Right ventricle myocardium superior (tissue), 1 donor: ENCODE measurements at regions of chr7 and their contacts with region 1.

Region 1: DNA sequence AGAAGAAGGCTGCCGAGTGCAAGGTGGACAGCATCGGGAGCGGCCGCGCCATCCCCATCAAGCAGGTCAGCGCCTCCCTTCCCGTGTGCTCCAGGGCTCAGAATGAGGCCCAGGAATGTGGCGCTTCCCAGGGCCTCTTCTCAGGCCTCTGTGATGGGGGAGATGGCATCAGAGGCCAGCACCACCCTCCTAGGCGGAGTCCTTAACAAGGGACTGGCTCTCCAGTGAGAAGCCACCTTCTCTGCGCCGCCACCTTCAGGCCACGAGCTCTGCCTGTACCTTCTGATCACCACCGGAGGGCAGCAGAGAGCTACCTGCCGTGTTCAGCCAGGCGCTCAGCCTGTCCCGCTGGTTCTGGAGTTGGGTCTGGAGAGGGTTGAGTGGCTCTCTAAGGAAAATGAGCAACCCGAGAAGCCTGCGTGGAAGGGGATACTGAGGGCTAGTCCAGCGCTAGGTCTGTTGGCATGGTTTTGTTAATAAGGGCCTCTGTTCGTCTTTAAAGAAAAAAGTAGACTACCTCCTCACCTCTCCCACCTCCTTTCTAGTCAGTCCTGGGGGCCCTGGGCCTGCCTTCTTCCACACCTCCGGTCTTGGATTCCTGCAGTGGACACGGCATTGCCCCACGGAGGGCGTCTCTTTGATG is 37.7 kb downstream of the AGAP3 start:
- DNase-seq: peak; percentile 83
- ATAC-seq: peak; percentile 84

Region 2: DNA sequence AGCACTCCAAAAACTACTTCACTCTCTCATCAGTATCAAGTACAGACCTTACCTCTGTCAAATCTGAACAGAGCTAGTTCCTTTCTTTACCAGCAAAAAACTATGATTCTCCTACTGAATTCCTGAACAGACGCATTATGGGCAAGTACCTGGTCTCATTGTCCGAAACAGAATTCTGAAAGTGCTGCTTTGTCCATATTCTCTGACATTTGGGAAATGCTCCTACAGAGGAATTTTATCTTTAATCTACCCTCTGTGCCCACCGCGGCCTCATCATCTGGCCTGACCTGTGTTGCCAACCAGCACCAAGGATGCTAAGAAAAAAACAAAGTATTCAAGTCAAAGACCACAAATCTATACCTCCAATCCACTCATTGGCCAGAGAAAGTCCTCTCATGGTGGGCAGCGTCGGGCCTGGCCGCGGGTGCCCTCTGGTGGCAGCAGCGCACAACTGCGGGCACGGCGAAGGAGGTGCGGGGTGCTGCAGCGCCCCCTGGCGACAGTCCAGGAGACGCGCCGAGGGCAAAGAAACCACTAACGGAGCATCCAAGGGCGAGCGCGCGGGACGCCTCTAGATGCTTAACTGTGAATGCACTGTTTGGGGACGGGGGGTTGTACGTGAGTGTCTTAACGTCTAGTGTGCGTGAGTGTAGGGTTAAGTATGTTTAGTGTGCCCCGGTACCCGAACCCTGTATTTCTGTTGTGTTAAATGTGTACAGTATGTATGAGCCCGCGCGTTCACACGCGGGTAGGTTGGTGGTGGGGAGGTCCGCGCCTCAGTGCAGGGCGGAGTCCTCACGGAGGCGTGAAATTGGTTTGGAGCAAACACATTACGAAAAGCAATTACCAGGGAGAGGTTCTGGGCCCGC is 48.6 kb after region 1 on chr7:
- intact Hi-C with region 1: loop called (anchors 2 kb)
- DNase-seq: peak; percentile 89
- ATAC-seq: peak; percentile 75

Region 3: DNA sequence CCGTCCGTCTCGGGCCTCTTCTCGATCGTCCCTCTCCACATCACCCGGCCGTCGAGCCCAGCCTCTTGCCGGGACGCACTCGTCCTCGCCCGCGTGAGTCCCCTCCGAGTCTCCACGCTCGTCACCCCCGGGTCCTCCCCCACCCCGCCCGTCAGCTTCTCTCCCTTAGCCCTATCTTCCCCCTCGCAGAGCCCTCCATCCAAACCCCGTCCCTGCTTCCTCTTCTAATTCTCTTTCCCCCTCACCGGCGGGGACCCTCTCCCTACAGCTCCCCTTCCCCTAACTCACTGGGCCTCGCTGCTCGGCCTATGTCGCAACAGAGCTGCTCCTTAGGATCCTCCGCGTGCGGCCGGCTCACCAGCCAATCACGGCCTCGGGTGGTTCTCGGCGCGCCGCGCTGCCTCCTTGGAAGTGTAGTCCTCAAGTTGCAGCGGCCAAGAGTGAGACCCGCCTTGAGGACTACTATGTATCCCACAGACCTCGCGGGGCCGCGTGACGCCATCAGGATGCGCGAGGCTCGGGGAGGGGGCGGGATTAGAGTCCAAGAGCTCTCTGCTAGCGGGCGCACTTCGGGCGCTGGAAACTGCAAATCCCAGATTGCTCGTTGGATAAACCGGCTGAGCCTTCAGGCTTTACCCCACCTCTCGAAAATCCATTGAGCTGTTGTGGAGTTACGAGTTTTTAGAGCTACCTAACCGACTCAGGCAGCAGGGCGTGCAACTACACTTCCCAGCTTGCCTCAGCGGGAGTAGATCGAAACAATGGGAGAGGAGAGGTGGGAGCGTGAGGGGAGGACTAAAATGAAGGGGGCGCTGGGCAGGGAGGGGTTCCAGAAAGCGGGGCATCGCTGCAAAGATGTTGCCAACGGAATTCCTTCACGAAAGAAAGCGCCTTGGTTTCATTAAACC is 103.2 kb after region 1 on chr7 and contains the start of gene ABCF2:
- intact Hi-C with region 1: no loop called
- DNase-seq: peak; percentile 100
- ATAC-seq: peak; percentile 99
- total RNA-seq, gene ABCF2: 23.9 TPM

Region 4: DNA sequence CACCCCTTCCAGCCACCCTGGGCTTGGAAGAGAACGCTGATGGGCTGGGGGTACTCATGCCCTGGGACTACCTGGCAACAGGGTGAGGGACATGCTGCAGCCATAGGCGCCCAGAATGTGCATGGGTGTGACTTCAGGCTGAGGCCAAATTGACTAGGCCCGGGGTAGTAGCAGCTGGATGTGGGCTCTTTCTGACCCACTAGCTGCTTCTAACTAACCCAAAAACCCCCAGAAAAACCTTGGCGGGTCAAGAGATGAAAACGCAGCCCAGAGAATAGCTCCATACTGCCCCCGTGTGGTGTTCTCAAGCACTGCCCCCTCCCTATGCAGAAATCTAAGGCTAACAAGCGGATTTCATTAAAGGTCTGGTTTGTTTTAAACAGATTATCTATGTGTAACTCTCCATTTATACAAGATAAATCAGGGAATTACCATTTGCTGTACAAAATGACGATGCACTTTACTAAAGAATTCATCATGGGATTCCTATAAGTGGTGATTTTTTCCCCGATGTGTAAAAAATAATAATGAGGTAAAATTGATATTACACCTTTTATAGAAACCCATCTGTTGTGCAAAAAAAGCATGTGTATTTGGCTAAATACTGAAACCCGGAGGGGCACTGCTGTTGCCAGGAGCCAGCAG is 120.4 kb after region 1 on chr7:
- intact Hi-C with region 1: loop called (anchors 10 kb)
- DNase-seq: no peak
- ATAC-seq: no peak

Region 5: DNA sequence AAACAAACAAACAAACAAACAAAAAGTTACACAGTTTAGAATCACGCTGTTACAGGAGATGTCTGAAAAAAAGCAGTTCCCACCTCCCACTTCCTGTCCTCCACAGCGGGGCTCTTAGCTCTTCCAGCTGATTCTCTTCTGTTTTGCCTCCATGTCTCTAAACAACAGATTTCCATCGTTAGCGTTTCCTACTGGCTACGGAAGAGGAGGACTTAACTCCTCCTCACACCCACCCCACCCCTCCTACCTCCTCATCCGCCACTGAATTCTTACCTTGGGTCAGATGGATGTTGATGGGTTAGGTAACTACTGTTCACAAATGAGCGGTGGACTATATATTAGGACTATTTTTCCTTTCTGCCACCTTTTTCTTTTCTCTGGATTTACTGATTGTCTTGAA is 180.9 kb after region 1 on chr7:
- intact Hi-C with region 1: loop called (anchors 5 kb)
- DNase-seq: no peak
- ATAC-seq: peak; percentile 12